ENCODE measurements at regions of chr3 and their contacts with region 1.

Region 1: GRCh38 chr3:62622553-62623193 is 249.3 kb upstream of the FEZF2 start:
- DNase-seq: peak; percentile 65
- ATAC-seq: peak; percentile 58
- H3K4me3 ChIP-seq: no peak overlapping the region
- H3K27ac ChIP-seq: no peak overlapping the region
- H3K4me1 ChIP-seq: no peaks in the 10 kb centered on the region
- H3K27me3 ChIP-seq: peaks cover 5% of the 10 kb centered on the region; the same call in 1 of the 2 replicates
- CTCF ChIP-seq: peak; percentile 75

Region 2: GRCh38 chr3:62653796-62654195 is 31.1 kb after region 1 on chr3:
- CTCF ChIA-PET with region 1: no interaction called
- POLR2A ChIA-PET with region 1: no interaction called
- intact Hi-C with region 1: no loop called
- DNase-seq: no peak
- ATAC-seq: no peak
- H3K4me3 ChIP-seq: no peak overlapping the region
- H3K27ac ChIP-seq: no peak overlapping the region
- H3K4me1 ChIP-seq: no peaks in the 10 kb centered on the region
- H3K27me3 ChIP-seq: no peaks in the 10 kb centered on the region
- CTCF ChIP-seq: no peak

Region 3: GRCh38 chr3:63232739-63233365 is 610.2 kb after region 1 on chr3:
- CTCF ChIA-PET with region 1: no interaction called
- POLR2A ChIA-PET with region 1: no interaction called
- intact Hi-C with region 1: loop called (anchors 1 kb)
- DNase-seq: peak; percentile 15
- ATAC-seq: no peak
- H3K4me3 ChIP-seq: no peak overlapping the region
- H3K27ac ChIP-seq: no peak overlapping the region
- H3K4me1 ChIP-seq: no peaks in the 10 kb centered on the region
- H3K27me3 ChIP-seq: no peaks in the 10 kb centered on the region
- CTCF ChIP-seq: peak; percentile 61; the same call in 1 of the 2 replicates

Region 4: GRCh38 chr3:63333842-63334241 is 711.2 kb after region 1 on chr3:
- CTCF ChIA-PET with region 1: no interaction called
- POLR2A ChIA-PET with region 1: no interaction called
- intact Hi-C with region 1: loop called (anchors 1 kb)
- DNase-seq: peak; percentile 35
- ATAC-seq: no peak
- H3K4me3 ChIP-seq: no peak overlapping the region
- H3K27ac ChIP-seq: no peak overlapping the region
- H3K4me1 ChIP-seq: no peaks in the 10 kb centered on the region
- H3K27me3 ChIP-seq: no peaks in the 10 kb centered on the region
- CTCF ChIP-seq: peak; percentile 58